Activated T-helper 2 cell treated with anti-CD3 and anti-CD28 coated beads, Interferon-gamma antibody, Interleukin-2, Interleukin-4, amounts not matched to agents 10 μg/mL and 5 μg/mL and 100 μg/mL, durations not matched to agents 14 hours and 24 hours and 36 hours (primary cell): ENCODE measurements at regions of chr1 and their contacts with region 1.

Region 1: GRCh38 chr1:48202030-48202752 is 20.3 kb upstream of the SLC5A9 start:
- DNase-seq: peak; percentile 27
- H3K4me3 Mint-ChIP-seq: no peak overlapping the region
- H3K27ac Mint-ChIP-seq: no peak overlapping the region
- H3K4me1 Mint-ChIP-seq: peaks cover 2% of the 10 kb centered on the region
- H3K27me3 Mint-ChIP-seq: peaks cover 2% of the 10 kb centered on the region

Region 2: DNA sequence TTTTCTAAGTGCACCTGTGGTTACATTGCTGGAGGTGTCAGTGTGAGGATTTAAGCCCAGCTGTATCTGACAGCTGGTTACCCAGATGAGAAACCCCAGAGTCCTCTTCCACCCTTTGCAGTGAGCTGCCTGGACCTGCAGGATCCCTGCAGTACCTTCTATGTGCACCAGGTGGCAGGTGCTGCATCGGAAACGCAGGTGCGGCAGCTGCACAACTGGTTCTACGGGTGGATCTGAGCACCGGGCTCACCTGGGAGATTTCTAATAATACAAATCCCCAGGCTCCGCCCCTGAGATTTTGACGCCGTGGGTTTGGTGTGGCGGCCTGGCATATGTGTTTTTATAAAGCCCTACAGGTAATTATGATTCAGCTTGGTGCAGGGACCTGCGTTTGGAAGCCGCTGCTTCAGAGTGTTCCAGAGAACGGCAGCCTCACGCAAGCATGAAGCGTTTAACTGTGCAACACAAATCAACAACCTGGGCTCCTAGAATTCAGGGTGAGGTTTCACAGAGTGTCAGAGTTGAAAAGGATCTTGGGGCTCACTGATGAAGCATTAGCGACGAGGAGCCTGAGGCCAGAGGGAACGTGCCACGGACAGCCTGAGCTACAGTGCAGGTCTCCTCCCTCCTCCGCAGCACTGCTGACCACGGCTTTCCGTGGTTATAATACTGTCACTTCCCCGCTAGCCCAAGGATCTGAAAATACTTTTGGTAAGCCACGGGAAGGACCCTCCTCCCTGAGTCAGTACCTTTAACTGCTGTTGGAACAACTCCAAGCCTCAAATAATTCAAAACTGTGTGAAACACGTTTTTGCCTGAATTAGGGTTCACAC is 108.3 kb before region 1 on chr1:
- intact Hi-C with region 1: loop called (anchors 5 kb)
- DNase-seq: peak; percentile 55
- H3K4me3 Mint-ChIP-seq: no peak overlapping the region
- H3K27ac Mint-ChIP-seq: no peak overlapping the region
- H3K4me1 Mint-ChIP-seq: no peaks in the 10 kb centered on the region
- H3K27me3 Mint-ChIP-seq: peaks cover 13% of the 10 kb centered on the region

Region 3: DNA sequence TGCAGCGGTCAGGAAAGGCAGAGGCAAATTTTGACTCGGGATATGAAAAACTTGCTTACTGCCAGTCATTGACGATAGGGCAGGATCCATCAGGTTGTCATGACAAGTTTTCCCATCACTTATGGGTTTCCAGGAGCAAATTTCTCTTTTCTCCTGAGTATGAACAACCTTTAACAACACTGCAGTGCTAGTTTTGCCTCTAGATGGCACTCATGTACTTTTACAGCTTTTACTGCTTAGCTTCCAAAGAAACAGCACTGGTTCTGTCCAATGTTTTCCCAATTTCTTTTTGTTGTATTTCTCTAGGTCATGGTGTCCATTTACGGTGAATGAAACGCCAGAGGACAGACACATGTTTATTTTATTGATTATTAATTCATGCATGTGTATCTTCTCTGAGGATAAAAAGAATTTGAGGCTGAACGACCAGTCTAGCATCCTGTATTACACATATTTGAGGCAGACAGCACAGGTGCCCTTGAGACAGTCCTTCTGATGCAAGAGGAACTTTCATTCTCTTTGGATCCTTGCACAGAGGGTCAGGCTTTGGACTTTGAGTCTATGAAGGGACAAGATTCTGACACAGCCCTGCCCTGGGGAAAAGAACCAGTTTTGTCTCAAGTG is 92.7 kb before region 1 on chr1:
- intact Hi-C with region 1: loop called (anchors 1 kb)
- DNase-seq: no peak
- H3K4me3 Mint-ChIP-seq: no peak overlapping the region
- H3K27ac Mint-ChIP-seq: no peak overlapping the region
- H3K4me1 Mint-ChIP-seq: no peaks in the 10 kb centered on the region
- H3K27me3 Mint-ChIP-seq: peaks cover 10% of the 10 kb centered on the region

Region 4: DNA sequence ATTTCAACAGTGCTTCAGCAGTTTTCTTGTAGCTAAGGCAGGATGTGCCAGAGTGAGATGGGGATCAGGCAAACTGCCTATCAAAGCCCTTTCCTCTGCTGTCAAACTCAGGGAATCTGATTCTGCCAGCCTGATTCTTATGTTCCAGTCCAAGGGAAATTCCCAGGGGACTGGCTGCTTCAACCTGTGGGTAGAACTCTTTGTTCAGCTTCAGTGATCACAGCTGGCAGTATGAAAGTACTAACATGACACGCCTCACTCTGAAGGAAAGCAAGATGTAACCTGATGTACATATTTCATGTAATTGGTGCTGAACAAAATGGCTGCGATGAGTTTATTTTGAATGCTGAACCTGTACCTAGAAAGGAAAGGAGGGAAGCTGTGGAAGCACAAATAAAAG is 19.8 kb before region 1 on chr1:
- intact Hi-C with region 1: no loop called
- DNase-seq: no peak
- H3K4me3 Mint-ChIP-seq: no peak overlapping the region
- H3K27ac Mint-ChIP-seq: no peak overlapping the region
- H3K4me1 Mint-ChIP-seq: no peaks in the 10 kb centered on the region
- H3K27me3 Mint-ChIP-seq: peaks cover 3% of the 10 kb centered on the region

Region 5: DNA sequence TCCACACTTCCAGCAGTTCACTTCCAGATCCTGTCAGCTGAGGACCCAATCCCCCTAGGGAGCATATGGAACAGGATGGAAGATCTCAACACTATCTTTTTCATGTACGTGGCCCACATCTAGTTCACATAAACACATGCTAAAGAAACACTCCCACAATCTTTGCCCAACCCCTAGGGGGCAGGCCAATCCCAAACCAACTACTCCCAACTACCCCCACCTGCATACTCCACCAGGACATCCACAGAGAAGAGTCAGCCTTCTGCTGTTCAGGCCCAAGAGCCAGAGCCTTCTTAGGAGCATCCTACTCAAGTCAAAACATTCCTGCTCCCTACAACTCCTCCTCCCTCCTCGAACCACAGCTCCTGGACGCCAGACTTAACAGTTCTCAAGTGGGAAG is 14.8 kb after region 1 on chr1:
- intact Hi-C with region 1: no loop called
- DNase-seq: no peak
- H3K4me3 Mint-ChIP-seq: no peak overlapping the region
- H3K27ac Mint-ChIP-seq: no peak overlapping the region
- H3K4me1 Mint-ChIP-seq: no peaks in the 10 kb centered on the region
- H3K27me3 Mint-ChIP-seq: peaks cover 2% of the 10 kb centered on the region